ENCODE measurements at regions of chr2 and their contacts with region 1.

Region 1: GRCh38 chr2:24382363-24383073 is 22.2 kb upstream of the ITSN2 start:
- DNase-seq: peak; percentile 67 to 80 (median 72)
- ATAC-seq: peak; percentile 98
- H3K4me3 ChIP-seq: no peak overlapping the region
- H3K27ac ChIP-seq: no peak overlapping the region
- H3K4me1 ChIP-seq: no peaks in the 10 kb centered on the region; a peak in 1 of 5 replicates
- H3K27me3 ChIP-seq: no peaks in the 10 kb centered on the region
- CTCF ChIP-seq: peak; percentile 62 to 80 (median 74)
- EP300 ChIP-seq: no peak
- POLR2A ChIP-seq: no peak
- RAD21 ChIP-seq: peak; percentile 60 to 80

Region 2: DNA sequence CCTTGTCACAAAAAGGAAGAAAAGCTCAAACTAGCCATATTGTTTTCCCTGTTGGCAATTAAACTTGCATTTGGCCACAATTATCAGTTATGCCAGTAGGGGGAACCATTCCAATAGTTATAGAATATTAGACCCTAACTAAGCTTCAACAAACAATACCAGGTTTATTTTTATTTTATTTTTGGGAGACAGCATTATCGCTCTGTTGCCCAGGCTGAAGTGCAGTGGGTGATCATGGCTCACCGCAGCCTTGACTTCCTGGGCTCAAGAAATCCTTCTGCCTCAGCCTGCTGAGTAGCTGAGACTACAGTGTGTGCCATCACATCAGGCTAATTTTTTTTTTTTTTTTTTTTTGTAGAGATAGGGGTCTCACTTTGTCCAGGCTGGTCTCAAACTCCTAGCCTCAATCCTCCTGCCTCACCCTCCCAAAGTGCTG is 557.7 kb before region 1 on chr2:
- CTCF ChIA-PET with region 1: interaction called, 4 read pairs
- POLR2A ChIA-PET with region 1: no interaction called
- in situ Hi-C with region 1: no loop called
- intact Hi-C with region 1: loop called (anchors 10 kb)
- DNase-seq: peak; percentile 23 to 62 (median 34)
- ATAC-seq: peak; percentile 86
- H3K4me3 ChIP-seq: no peak overlapping the region
- H3K27ac ChIP-seq: no peak overlapping the region
- H3K4me1 ChIP-seq: no peaks in the 10 kb centered on the region
- H3K27me3 ChIP-seq: no peaks in the 10 kb centered on the region
- CTCF ChIP-seq: peak; percentile 54 to 80 (median 71); a peak in 5 of 6 replicates
- EP300 ChIP-seq: no peak
- POLR2A ChIP-seq: no peak
- RAD21 ChIP-seq: peak; percentile 46 to 66

Region 3: DNA sequence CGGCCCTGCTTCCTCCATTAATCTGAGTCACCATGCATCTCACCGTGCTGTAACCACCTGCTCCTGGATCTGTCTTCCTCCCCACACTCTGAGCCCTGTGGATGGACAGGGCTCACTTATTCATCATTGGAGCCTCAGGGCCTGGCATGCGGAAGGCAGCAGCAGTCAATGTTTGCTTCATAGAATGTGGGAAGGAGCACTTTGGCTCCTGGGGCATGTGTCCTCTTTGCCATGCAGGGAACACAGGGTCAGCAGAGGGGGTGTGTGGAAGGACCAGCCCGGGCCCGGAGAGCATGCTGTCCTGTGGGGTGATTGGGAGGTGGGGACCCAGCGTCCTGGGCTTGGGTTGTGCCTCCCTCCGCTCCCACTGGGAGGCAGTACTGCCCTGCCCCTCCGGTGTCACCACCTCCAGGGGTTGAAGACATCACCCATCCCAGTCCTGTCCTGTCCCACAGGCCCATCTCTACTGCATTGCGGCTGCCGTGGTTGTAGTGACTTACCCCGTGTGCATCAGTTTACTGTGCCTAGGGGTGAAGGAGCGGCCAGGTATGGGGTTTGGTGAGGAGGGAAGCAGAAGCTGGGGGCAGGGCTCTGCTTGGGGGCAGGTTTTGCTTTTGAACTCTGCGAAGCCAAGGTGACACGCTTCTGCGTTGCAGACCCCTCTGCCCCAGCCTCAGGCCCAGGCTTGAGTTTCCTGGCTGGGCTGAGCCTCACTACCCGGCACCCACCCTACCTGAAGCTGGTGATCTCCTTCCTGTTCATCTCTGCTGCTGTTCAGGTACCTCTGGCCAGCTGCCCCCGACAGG is 361.1 kb before region 1 on chr2:
- CTCF ChIA-PET with region 1: no interaction called
- POLR2A ChIA-PET with region 1: no interaction called
- in situ Hi-C with region 1: no loop called
- intact Hi-C with region 1: loop called (anchors 5 kb)
- DNase-seq: peak; percentile 55 to 74 (median 73)
- ATAC-seq: peak; percentile 93
- H3K4me3 ChIP-seq: no peak overlapping the region
- H3K27ac ChIP-seq: no peak overlapping the region
- H3K4me1 ChIP-seq: peaks cover under 1 to 35% of the 10 kb centered on the region in 2 experiments; a peak in 4 of 5 replicates
- H3K27me3 ChIP-seq: no peaks in the 10 kb centered on the region
- CTCF ChIP-seq: peak; percentile 72 to 85 (median 78)
- EP300 ChIP-seq: no peak
- POLR2A ChIP-seq: no peak
- RAD21 ChIP-seq: peak; percentile 47 to 82

Region 4: DNA sequence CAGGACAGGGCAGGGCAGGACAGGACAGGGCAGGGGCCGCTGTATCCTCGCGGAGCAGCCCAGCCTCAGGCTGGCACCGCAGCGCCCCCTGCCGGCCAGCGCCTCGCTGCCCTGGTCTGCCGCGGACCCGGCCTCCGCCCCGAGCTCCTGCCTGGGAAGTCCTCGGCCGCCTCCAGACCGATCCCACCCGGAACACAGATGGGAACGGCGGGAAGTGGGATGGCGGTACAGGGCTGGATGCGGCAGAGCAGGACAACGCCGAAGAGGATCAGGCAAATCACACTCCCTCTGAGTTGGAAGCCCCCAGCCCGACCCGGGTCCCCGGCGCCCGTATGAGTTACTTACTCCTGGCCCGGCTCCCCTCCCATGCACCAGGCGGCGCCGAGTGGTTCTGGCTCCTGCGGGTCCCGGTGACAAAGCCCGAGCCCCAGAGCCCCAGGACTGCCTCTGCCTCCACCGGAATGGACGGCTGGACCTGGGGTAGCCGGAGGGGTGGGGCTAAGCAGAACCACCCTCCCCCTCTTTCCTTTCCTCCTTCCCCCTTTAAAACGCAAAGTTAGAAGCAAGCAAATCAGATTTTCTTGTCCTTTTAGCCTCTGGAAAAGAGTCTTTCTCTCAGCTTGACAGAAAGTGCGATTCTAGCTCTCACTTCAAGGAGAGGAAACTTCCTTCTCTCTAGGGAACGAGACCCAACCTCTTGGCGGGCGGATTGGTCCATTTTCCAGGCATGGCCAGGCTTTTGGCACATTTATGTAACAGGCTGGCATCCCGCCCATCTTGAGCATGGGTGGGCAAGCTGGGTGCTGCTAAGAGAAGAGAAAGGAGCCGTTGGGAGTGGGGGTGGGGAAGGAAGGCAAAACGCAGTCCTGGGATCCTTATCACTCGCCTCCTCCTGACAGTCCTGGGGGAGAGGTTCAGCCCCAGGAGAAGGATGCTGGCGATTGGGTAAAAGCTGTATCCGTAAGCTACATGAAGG is 297.8 kb before region 1 on chr2 and contains the start of gene TP53I3:
- CTCF ChIA-PET with region 1: no interaction called
- POLR2A ChIA-PET with region 1: no interaction called
- in situ Hi-C with region 1: no loop called
- intact Hi-C with region 1: loop called (anchors 1 kb)
- DNase-seq: peak; percentile 90 to 95 (median 92)
- ATAC-seq: peak; percentile 95
- H3K4me3 ChIP-seq: peak within 1 kb of the TSS; percentile 58
- H3K27ac ChIP-seq: peak within 1 kb of the TSS; percentile 75
- H3K4me1 ChIP-seq: peaks cover 12 to 18% of the 10 kb centered on the region in 2 experiments; a peak in 4 of 5 replicates
- H3K27me3 ChIP-seq: no peaks in the 10 kb centered on the region
- CTCF ChIP-seq: peak; percentile 85 to 95 (median 86)
- EP300 ChIP-seq: peak; percentile 16; the same call in 1 of the 2 replicates
- POLR2A ChIP-seq: peak; percentile 81
- RAD21 ChIP-seq: peak; percentile 80 to 83
- polyA plus RNA-seq, gene TP53I3: 0.65 to 1.3 TPM

Region 5: DNA sequence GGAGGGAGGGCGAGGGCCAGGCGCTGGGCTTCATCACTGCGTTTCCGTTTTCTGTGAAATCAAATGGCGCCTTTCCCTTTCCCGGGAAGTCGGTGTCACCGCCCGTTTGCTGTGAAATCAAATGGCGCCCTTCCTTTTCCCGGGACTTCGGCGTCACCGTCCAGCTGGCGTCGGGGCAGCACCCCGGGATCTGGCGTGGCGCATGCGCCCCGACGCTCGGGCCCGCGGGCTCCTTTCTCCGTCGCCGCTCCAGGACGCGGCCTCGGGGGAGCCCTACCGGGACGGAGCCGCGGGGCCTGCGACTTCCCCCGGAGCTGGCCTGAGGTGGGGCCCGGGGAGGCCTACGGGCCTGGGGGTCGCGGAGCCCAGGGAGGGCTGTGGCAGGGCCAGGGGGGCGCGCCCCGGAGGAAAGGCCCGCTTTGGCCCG is 207.7 kb before region 1 on chr2 and contains the start of gene FAM228A:
- CTCF ChIA-PET with region 1: no interaction called
- POLR2A ChIA-PET with region 1: no interaction called
- in situ Hi-C with region 1: no loop called
- intact Hi-C with region 1: loop called (anchors 5 kb)
- DNase-seq: no peak
- ATAC-seq: no peak
- H3K4me3 ChIP-seq: no peak within 1 kb of the TSS
- H3K27ac ChIP-seq: no peak within 1 kb of the TSS
- H3K4me1 ChIP-seq: peaks cover 0 to 7% of the 10 kb centered on the region in 2 experiments; a peak in 1 of 5 replicates
- H3K27me3 ChIP-seq: peaks cover 4 to 8% of the 10 kb centered on the region in 2 experiments; a peak in 4 of 5 replicates
- CTCF ChIP-seq: no peak
- EP300 ChIP-seq: no peak
- POLR2A ChIP-seq: no peak
- RAD21 ChIP-seq: no peak
- polyA plus RNA-seq, gene FAM228A: not detected

Region 6: GRCh38 chr2:24228470-24228869 is 154.0 kb before region 1 on chr2:
- CTCF ChIA-PET with region 1: interaction called, 3 read pairs
- POLR2A ChIA-PET with region 1: no interaction called
- in situ Hi-C with region 1: loop called (anchors 5 kb)
- intact Hi-C with region 1: loop called (anchors 1 kb)
- DNase-seq: peak in 1 of 4 experiments; percentile 24
- ATAC-seq: peak; percentile 79
- H3K4me3 ChIP-seq: no peak overlapping the region
- H3K27ac ChIP-seq: no peak overlapping the region
- H3K4me1 ChIP-seq: no peaks in the 10 kb centered on the region; a peak in 1 of 5 replicates
- H3K27me3 ChIP-seq: no peaks in the 10 kb centered on the region
- CTCF ChIP-seq: peak; percentile 32 to 60 (median 43); a peak in 5 of 6 replicates
- EP300 ChIP-seq: no peak
- POLR2A ChIP-seq: no peak
- RAD21 ChIP-seq: peak; percentile 43 to 67; a peak in 3 of 4 replicates

Region 7: DNA sequence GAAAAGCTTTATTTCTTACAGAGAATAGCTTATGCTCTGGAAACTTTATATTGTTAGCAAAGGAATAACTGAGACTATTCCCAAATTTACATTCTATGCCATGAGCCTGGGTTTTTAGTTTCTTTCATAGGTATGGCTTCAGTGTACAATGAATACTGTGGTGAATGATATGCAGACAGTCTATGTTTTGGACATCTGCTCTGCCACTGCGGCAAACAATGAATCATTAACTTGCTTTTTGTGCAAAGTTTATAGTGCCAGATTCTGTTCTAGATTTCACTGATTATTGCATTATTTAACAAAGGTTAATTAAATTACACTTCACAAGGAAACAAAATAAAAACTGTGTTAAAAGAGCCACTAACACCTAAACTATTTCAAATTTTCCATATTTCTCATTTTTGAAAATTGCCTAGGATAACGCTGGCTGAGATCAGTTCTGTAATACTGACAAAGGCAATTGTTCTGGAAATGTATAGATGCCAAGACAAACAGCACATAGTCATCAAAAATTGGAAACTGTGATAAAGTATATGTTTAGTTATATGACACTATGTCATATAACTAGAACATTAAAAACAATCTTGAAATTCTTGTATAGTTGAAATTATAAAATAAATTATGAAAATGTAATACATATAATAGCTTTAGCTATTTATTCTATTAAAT is 96.9 kb before region 1 on chr2:
- CTCF ChIA-PET with region 1: no interaction called
- POLR2A ChIA-PET with region 1: no interaction called
- in situ Hi-C with region 1: no loop called
- intact Hi-C with region 1: no loop called
- DNase-seq: no peak
- ATAC-seq: no peak
- H3K4me3 ChIP-seq: no peak overlapping the region
- H3K27ac ChIP-seq: no peak overlapping the region
- H3K4me1 ChIP-seq: no peaks in the 10 kb centered on the region
- H3K27me3 ChIP-seq: no peaks in the 10 kb centered on the region
- CTCF ChIP-seq: no peak
- EP300 ChIP-seq: no peak
- POLR2A ChIP-seq: no peak
- RAD21 ChIP-seq: no peak